ENCODE measurements at regions of chr4 and their contacts with region 1.

Region 1: GRCh38 chr4:70601422-70602039 is 9.5 kb downstream of the AMBN start:
- DNase-seq: peak; percentile 79
- ATAC-seq: peak; percentile 99
- H3K4me3 ChIP-seq: no peak overlapping the region
- H3K27ac ChIP-seq: no peak overlapping the region
- H3K4me1 ChIP-seq: no peaks in the 10 kb centered on the region
- H3K27me3 ChIP-seq: no peaks in the 10 kb centered on the region
- CTCF ChIP-seq: peak; percentile 75 to 94 (median 93)
- POLR2A ChIP-seq: no peak
- RAD21 ChIP-seq: peak; percentile 92

Region 2: GRCh38 chr4:70687821-70688794 is 86.6 kb after region 1 on chr4 and contains the start of gene UTP3:
- CTCF ChIA-PET with region 1: no interaction called
- POLR2A ChIA-PET with region 1: no interaction called
- RAD21 ChIA-PET with region 1: no interaction called
- intact Hi-C with region 1: loop called (anchors 5 kb)
- DNase-seq: peak; percentile 99
- ATAC-seq: peak; percentile 95
- H3K4me3 ChIP-seq: peak within 1 kb of the TSS; percentile 98 to 99
- H3K27ac ChIP-seq: peak within 1 kb of the TSS; percentile 86
- H3K4me1 ChIP-seq: peaks cover 11 to 16% of the 10 kb centered on the region in 2 experiments
- H3K27me3 ChIP-seq: no peaks in the 10 kb centered on the region
- CTCF ChIP-seq: peak; percentile 75 to 96 (median 95)
- POLR2A ChIP-seq: peak; percentile 80
- RAD21 ChIP-seq: peak; percentile 65
- total RNA-seq, gene UTP3: 33.7 TPM

Region 3: DNA sequence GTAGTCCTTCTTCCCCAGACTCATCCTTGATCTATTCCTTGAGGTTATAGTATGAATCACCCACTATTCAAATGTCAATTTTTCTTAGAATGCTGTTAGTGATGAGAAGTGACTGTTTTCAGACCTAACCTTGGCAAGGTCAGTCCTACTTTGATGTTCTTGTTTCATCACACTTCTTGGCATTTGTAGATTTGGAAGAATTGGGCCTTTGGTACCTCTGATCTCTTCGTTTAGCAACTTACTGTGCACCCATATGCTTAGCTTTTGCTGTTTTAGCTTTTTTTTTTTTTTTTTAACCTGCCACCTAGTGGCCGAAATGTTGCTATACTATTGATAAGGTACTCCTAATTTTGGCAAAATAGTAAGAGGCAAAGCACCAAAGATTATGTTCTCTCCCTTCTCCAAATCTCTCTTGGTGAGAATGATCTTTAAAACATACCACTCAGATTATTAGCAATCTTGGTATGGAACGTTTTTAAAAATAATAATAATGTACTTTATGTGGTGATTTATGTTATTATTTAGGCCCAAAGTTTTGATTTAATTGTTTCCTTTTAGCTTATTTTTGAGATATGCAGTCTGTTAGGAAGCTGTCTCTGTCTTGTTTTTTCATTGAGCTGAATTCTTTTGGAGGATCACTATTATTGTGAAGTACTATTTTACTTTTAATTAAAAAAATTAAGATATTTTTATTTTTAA is 408.5 kb after region 1 on chr4:
- CTCF ChIA-PET with region 1: interaction called, 14 read pairs
- POLR2A ChIA-PET with region 1: no interaction called
- RAD21 ChIA-PET with region 1: no interaction called
- intact Hi-C with region 1: loop called (anchors 10 kb)
- DNase-seq: peak; percentile 39
- ATAC-seq: peak; percentile 63; the same call in 1 of the 2 replicates
- H3K4me3 ChIP-seq: no peak overlapping the region
- H3K27ac ChIP-seq: no peak overlapping the region
- H3K4me1 ChIP-seq: peaks cover 0 to 6% of the 10 kb centered on the region in 2 experiments; a peak in 2 of 4 replicates
- H3K27me3 ChIP-seq: no peaks in the 10 kb centered on the region
- CTCF ChIP-seq: peak; percentile 46 to 90 (median 52); a peak in 5 of 6 replicates
- POLR2A ChIP-seq: no peak
- RAD21 ChIP-seq: peak; percentile 50

Region 4: DNA sequence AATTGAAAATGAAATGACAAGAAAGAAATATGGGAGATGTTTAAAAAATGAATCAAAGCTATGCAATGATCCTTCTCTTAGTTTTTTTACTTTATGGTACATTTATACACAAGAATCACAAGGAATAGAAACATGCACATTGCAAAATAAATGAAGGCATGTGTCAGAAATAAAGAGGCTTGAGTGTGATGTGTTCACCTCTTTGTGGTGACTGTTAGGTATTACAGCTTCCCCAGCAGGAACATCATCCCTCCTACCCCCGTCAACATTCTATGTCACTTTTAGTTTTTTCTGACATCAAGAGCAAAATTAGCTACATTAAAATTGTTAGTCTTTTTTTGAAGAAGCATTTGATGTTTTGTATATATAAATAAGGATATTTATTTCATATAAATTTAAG is 952.1 kb after region 1 on chr4:
- CTCF ChIA-PET with region 1: no interaction called
- POLR2A ChIA-PET with region 1: no interaction called
- RAD21 ChIA-PET with region 1: no interaction called
- intact Hi-C with region 1: loop called (anchors 10 kb)
- DNase-seq: peak; percentile 10
- ATAC-seq: peak; percentile 66
- H3K4me3 ChIP-seq: no peak overlapping the region
- H3K27ac ChIP-seq: no peak overlapping the region
- H3K4me1 ChIP-seq: no peaks in the 10 kb centered on the region
- H3K27me3 ChIP-seq: no peaks in the 10 kb centered on the region
- CTCF ChIP-seq: peak; percentile 11 to 50 (median 35); a peak in 4 of 6 replicates
- POLR2A ChIP-seq: no peak
- RAD21 ChIP-seq: peak; percentile 41

Region 5: DNA sequence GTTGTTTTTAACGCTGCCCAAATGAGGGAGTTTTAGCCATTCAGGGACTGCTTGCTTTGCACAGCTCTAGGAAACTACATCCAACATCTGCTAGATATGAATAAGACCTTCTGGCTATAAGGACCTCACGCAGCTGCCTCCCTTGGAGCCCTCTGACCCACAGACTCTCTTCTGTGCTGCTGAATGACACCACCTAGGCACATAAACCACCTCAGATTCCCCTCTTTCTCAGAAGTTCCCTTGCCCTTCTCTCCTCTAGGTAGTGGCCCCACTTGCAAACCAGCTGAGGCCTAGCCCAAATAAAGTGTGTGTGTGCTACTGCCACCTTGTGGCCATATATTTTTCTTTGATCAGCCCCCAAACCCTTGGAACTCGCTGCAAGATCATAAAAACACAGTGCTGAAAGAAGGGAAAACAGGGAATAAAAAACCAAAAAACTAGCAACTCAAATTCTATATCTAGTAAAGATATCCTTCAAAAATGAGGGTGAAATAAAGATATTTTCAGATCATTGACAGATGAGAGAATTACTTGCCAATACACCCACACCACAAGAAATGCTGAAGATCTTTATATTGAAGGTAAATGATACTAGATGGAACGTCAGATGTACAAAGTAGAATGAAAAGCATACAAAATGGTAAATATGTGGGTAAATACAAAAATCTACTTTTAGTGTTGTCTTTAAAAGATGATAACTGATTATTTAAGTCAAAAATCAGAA is 1701.6 kb after region 1 on chr4:
- CTCF ChIA-PET with region 1: interaction called, 6 read pairs
- POLR2A ChIA-PET with region 1: no interaction called
- RAD21 ChIA-PET with region 1: no interaction called
- intact Hi-C with region 1: loop called (anchors 2 kb)
- DNase-seq: peak; percentile 6
- ATAC-seq: peak; percentile 75
- H3K4me3 ChIP-seq: no peak overlapping the region
- H3K27ac ChIP-seq: no peak overlapping the region
- H3K4me1 ChIP-seq: no peaks in the 10 kb centered on the region
- H3K27me3 ChIP-seq: no peaks in the 10 kb centered on the region
- CTCF ChIP-seq: peak; percentile 12 to 69 (median 51); a peak in 5 of 6 replicates
- POLR2A ChIP-seq: no peak
- RAD21 ChIP-seq: peak; percentile 38; the same call in 1 of the 2 replicates

Region 6: GRCh38 chr4:72468904-72469502 is 1867.5 kb after region 1 on chr4:
- CTCF ChIA-PET with region 1: no interaction called
- POLR2A ChIA-PET with region 1: no interaction called
- RAD21 ChIA-PET with region 1: no interaction called
- intact Hi-C with region 1: loop called (anchors 10 kb)
- DNase-seq: peak; percentile 4
- ATAC-seq: no peak
- H3K4me3 ChIP-seq: no peak overlapping the region
- H3K27ac ChIP-seq: no peak overlapping the region
- H3K4me1 ChIP-seq: no peaks in the 10 kb centered on the region
- H3K27me3 ChIP-seq: no peaks in the 10 kb centered on the region
- CTCF ChIP-seq: peak in 2 of 3 experiments; percentile 17 to 55; a peak in 2 of 6 replicates
- POLR2A ChIP-seq: no peak
- RAD21 ChIP-seq: peak; percentile 32

Measured in HCT116 (cell line).